Right ventricle myocardium superior (tissue), 1 donor: ENCODE measurements at regions of chr1 and their contacts with region 1.

Region 1: DNA sequence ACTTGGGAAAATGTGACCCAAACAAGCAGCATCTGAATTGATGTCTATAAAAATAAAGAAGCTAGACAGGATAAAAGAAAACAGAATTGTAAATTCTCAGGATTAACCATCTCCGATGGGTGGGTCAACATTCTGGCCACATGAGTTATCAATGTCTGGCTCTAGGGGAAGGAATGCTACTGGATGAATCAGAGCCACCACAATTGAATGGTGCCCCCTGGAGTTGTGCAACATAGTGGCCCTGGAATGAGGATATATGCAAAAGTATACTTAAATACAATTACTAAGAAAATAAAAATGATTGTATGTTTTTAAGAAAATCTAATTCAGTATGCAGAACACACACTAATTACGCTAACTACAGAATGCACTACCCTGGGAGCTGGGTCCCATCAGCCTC is 185.6 kb downstream of the TGFBR3 start:
- DNase-seq: no peak
- ATAC-seq: no peak

Region 2: GRCh38 chr1:91555821-91556531 is 144.4 kb before region 1 on chr1:
- intact Hi-C with region 1: no loop called
- DNase-seq: no peak
- ATAC-seq: no peak

Region 3: DNA sequence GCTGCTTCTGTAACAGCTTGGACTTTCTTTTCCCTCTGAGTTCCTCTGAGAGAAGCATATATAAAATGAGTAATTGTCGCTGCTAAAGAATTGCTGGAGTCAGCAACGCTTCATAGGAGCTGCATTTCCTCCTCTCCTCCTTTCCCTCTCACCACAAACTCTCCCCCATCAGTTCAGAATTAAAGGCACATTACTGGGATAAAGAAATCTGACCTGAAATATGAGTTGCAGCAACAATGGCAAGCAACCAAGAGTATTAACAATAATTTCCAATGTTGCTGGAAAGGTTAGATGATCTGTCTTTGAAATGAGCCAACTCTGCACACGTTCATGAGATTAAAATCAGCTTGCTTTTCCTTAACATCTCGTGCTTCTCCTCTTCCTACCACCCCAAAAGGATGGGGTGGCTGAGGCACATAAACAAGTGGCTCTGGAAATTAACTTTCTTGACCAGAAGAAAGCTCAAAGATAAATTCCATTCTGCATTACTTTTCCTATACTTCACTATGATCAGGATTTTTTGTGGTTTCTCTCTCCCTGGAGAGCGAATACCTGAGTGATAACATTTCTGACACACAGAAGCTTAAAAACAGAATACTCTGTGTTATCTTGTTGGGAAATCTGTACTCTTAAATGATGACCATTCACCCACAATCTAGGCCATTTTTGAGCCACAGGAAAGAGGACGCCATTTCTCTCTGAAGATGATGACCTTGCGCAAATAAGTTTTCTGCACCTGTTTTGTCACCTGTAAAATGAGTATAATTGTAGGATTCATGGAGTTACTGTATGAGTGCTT is 95.5 kb after region 1 on chr1:
- intact Hi-C with region 1: loop called (anchors 10 kb)
- DNase-seq: no peak
- ATAC-seq: no peak